ENCODE measurements at regions of chr7 and their contacts with region 1.

Region 1: GRCh38 chr7:100673300-100673941 is at the start of gene GNB2:
- DNase-seq: peak; percentile 97 to 99 (median 99)
- H3K4me3 ChIP-seq: peak within 1 kb of the TSS; percentile 64 to 100 (median 85)
- H3K4me3 Mint-ChIP-seq: peak within 1 kb of the TSS; percentile 97 to 98
- H3K27ac ChIP-seq: peak within 1 kb of the TSS; percentile 88 to 91
- H3K27ac Mint-ChIP-seq: peak within 1 kb of the TSS; percentile 94 to 98 (median 97)
- H3K4me1 ChIP-seq: peaks cover 30 to 42% of the 10 kb centered on the region in 2 donors
- H3K4me1 Mint-ChIP-seq: peaks cover 31% of the 10 kb centered on the region
- H3K27me3 ChIP-seq: no peaks in the 10 kb centered on the region
- H3K27me3 Mint-ChIP-seq: peaks cover 4 to 9% (median 8%) of the 10 kb centered on the region in 3 donors
- CTCF ChIP-seq: no peak
- polyA plus RNA-seq, gene GNB2: 90.0 to 436 (median 94.6) TPM

Region 2: GRCh38 chr7:100126931-100127865 is 546.2 kb before region 1 on chr7 and contains the start of gene MBLAC1:
- intact Hi-C with region 1: loop called in 1 of 2 experiments (anchors 10 kb)
- DNase-seq: peak; percentile 81 to 90 (median 84)
- H3K4me3 ChIP-seq: peak within 1 kb of the TSS; percentile 83 to 93 (median 87)
- H3K4me3 Mint-ChIP-seq: peak within 1 kb of the TSS; percentile 98 to 99
- H3K27ac ChIP-seq: peak within 1 kb of the TSS; percentile 92 to 93
- H3K27ac Mint-ChIP-seq: peak within 1 kb of the TSS; percentile 98 to 100 (median 99)
- H3K4me1 ChIP-seq: peaks cover 42 to 52% of the 10 kb centered on the region in 2 donors
- H3K4me1 Mint-ChIP-seq: peaks cover 45% of the 10 kb centered on the region
- H3K27me3 ChIP-seq: peaks cover 0 to 14% of the 10 kb centered on the region in 2 donors
- H3K27me3 Mint-ChIP-seq: peaks cover 11 to 19% (median 17%) of the 10 kb centered on the region in 3 donors
- CTCF ChIP-seq: no peak
- polyA plus RNA-seq, gene MBLAC1: 0.57 to 0.81 (median 0.59) TPM

Region 3: DNA sequence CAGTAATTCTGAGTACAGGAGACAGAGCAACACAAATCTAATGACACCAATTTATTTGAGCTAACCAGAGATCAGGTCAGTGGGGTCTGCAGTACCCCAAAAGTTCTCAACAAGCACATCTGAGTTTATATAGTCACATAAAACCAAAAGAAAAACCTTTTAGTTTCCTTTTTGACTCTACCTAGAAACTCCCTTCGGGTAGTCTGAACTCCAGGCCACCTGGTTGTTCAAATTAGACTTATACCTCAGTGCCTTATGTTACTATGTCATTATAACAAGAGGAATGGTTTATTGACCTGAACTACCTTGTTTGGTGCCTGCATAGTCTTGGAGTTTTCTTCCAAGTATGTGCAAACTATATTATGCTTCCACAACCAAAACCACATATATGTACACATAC is 259.5 kb before region 1 on chr7:
- intact Hi-C with region 1: no loop called
- DNase-seq: no peak
- H3K4me3 ChIP-seq: no peak overlapping the region
- H3K4me3 Mint-ChIP-seq: no peak overlapping the region
- H3K27ac ChIP-seq: peak overlapping the region in 1 of 2 donors; percentile 21
- H3K27ac Mint-ChIP-seq: peak overlapping the region in 1 of 7 donors; percentile 49
- H3K4me1 ChIP-seq: peaks cover 10 to 14% of the 10 kb centered on the region in 2 donors
- H3K4me1 Mint-ChIP-seq: peaks cover 10% of the 10 kb centered on the region
- H3K27me3 ChIP-seq: no peaks in the 10 kb centered on the region
- H3K27me3 Mint-ChIP-seq: peaks cover 0 to 4% (median 0%) of the 10 kb centered on the region in 3 donors
- CTCF ChIP-seq: no peak

Region 4: DNA sequence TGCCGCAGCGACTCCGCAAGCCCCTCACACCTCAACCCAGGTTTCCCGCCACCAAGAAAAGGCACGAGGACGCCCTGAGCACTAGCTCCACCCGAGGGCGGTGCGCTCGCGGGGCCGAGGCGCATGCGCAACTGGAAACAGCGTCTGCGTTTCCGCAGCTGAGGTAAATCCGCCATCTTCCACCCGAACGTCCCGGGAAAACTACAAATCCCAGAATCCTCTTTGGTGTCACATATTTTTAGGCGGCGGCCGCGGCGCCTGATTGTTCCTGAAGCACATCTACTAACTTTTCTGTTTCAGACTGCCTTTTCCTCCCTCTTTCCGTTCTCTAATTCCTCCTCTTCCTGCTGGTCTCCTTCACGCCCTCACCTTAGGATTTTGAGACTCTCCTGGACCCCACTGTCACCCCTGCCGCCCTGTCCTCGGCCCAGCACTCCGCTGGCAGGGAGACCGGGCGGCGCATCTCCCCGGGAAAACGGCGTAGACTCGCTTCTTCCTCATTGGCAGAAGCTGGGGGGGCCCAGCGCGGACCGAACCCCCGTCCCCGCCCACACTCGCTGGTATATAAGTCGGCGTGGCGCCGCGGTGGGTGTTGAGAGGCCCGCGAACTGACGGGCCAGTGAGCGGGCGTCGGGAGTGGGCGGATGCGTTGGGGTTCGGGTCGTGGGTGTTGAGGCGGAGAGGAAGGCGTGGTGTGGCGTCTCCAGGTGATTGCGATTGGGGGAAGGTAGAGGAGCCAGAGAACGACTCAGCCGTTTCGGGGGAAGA is 245.0 kb before region 1 on chr7 and contains the start of gene ZCWPW1:
- intact Hi-C with region 1: loop called in 1 of 2 experiments (anchors 10 kb)
- DNase-seq: peak; percentile 91 to 97 (median 95)
- H3K4me3 ChIP-seq: peak within 1 kb of the TSS; percentile 77 to 93 (median 80)
- H3K4me3 Mint-ChIP-seq: peak within 1 kb of the TSS; percentile 96 to 99
- H3K27ac ChIP-seq: peak within 1 kb of the TSS; percentile 99 to 100
- H3K27ac Mint-ChIP-seq: peak within 1 kb of the TSS; percentile 99 to 100 (median 100)
- H3K4me1 ChIP-seq: peaks cover 23 to 31% of the 10 kb centered on the region in 2 donors
- H3K4me1 Mint-ChIP-seq: peaks cover 29% of the 10 kb centered on the region
- H3K27me3 ChIP-seq: no peaks in the 10 kb centered on the region
- H3K27me3 Mint-ChIP-seq: peaks cover 1 to 6% (median 1%) of the 10 kb centered on the region in 3 donors
- CTCF ChIP-seq: no peak
- polyA plus RNA-seq, gene ZCWPW1: 0.60 to 1.9 (median 1.2) TPM

Region 5: DNA sequence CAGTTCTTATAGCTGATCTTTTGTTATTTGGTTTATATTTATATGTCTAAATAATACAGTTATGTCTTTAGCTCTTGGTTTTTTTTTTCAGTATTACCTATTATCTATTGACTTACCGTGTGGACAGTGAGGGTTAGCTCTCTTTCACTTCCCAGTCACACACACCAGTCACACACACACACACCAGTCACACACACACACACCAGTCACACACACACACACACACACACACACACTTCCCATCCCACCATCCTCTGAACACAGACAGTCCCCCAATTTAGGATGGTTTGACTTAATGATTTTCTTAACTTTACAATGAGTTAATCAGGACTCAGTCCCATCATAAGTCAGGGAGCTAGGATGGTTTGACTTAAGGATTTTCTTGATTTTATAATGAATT is 153.3 kb before region 1 on chr7:
- intact Hi-C with region 1: no loop called
- DNase-seq: no peak
- H3K4me3 ChIP-seq: no peak overlapping the region
- H3K4me3 Mint-ChIP-seq: no peak overlapping the region
- H3K27ac ChIP-seq: no peak overlapping the region
- H3K27ac Mint-ChIP-seq: no peak overlapping the region
- H3K4me1 ChIP-seq: peaks cover 6 to 11% of the 10 kb centered on the region in 2 donors
- H3K4me1 Mint-ChIP-seq: peaks cover 9% of the 10 kb centered on the region
- H3K27me3 ChIP-seq: no peaks in the 10 kb centered on the region
- H3K27me3 Mint-ChIP-seq: peaks cover 0 to 7% (median 4%) of the 10 kb centered on the region in 3 donors
- CTCF ChIP-seq: no peak

Region 6: DNA sequence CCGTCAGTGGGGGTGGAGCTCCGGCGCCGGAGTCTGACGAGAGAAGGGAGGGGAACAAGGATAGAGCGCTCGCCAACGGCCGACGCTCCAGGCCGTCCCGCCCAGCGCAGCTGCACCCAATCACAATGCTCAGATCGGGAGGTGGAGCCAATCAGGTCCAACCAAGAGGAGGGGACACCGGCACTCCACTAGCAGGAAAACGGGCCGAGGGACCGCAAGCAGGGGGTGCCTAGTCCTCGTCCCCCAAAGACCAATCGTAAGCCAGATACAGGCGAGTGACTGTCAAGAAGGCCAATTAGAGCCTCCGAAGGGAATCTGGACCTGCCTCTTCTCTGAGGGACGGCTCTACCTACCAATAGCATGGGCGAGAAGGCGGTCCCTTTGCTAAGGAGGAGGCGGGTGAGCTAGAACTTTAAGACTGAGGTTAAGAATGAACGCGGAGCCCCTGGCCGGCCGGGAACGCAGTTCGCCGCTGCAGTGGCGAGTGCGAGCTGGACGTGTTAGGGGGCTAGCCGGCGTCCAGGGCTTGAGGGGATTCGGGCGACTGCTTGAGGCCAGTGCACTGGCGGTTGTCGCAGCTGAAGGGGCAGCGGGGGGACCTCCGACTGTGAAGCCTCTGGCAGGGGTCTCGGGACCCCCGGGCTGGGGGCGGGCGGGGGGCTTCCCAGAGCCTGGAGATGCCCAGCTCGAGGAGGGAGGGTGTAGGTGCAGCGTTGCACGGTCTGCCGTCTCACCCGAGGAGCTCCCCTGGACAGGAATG is 87.0 kb before region 1 on chr7 and contains the start of gene FBXO24:
- intact Hi-C with region 1: loop called (anchors 1 to 2 kb)
- DNase-seq: peak; percentile 100
- H3K4me3 ChIP-seq: peak within 1 kb of the TSS; percentile 77 to 100 (median 93)
- H3K4me3 Mint-ChIP-seq: peak within 1 kb of the TSS; percentile 93 to 99
- H3K27ac ChIP-seq: peak within 1 kb of the TSS; percentile 84 to 88
- H3K27ac Mint-ChIP-seq: peak within 1 kb of the TSS; percentile 93 to 98 (median 98)
- H3K4me1 ChIP-seq: peaks cover 40 to 52% of the 10 kb centered on the region in 2 donors
- H3K4me1 Mint-ChIP-seq: peaks cover 48% of the 10 kb centered on the region
- H3K27me3 ChIP-seq: peaks cover 0 to 14% of the 10 kb centered on the region in 2 donors
- H3K27me3 Mint-ChIP-seq: peaks cover 11 to 23% (median 17%) of the 10 kb centered on the region in 3 donors
- CTCF ChIP-seq: no peak
- polyA plus RNA-seq, gene FBXO24: 0.42 to 1.2 (median 0.69) TPM

Region 7: DNA sequence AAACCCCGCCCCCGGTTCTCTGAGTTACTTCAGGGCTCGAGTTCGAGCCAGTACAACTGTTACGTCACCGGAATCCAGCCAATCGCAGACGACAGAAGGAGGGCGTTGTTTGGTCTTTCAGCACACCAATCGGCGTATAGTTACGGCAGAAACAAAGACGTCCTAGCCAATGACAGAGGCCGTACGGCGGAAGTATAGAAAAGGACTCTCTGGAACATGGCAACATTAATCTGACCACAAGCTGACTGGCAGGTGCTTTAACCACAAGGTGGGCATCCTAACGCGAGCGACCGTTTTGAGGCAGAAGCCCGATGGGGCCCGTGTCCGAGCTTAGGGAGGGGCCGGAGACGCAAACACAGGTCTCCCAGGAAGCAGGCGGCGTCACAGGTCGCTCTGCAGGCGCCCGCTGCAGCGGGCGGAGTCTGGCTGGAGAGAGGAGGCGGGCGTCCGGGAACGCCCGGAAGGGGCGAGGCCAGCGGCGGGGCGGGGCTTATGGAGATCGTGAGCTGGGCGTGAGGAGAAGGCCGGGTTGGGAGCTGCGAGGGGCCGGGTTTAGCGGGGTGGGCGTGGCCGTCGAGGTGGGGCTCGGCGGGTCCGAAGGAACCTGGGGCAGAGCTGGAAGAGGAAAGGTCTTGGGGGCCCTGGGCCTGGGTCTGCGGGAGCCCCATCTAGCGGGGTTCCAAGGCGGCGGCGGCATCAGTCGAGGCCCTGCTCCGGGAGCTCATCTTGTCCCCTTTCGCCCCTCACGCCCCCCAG is 61.3 kb before region 1 on chr7 and contains the start of gene MOSPD3:
- intact Hi-C with region 1: loop called in 1 of 2 experiments (anchors 1 kb)
- DNase-seq: peak; percentile 98 to 99 (median 98)
- H3K4me3 ChIP-seq: peak within 1 kb of the TSS; percentile 60 to 91 (median 64)
- H3K4me3 Mint-ChIP-seq: peak within 1 kb of the TSS; percentile 93 to 97
- H3K27ac ChIP-seq: peak within 1 kb of the TSS; percentile 66 to 95
- H3K27ac Mint-ChIP-seq: peak within 1 kb of the TSS; percentile 97 to 100 (median 99)
- H3K4me1 ChIP-seq: peaks cover 22 to 27% of the 10 kb centered on the region in 2 donors
- H3K4me1 Mint-ChIP-seq: peaks cover 19% of the 10 kb centered on the region
- H3K27me3 ChIP-seq: no peaks in the 10 kb centered on the region
- H3K27me3 Mint-ChIP-seq: peaks cover 2 to 10% (median 8%) of the 10 kb centered on the region in 3 donors
- CTCF ChIP-seq: no peak
- polyA plus RNA-seq, gene MOSPD3: 12.7 to 15.5 (median 13.3) TPM

Region 8: DNA sequence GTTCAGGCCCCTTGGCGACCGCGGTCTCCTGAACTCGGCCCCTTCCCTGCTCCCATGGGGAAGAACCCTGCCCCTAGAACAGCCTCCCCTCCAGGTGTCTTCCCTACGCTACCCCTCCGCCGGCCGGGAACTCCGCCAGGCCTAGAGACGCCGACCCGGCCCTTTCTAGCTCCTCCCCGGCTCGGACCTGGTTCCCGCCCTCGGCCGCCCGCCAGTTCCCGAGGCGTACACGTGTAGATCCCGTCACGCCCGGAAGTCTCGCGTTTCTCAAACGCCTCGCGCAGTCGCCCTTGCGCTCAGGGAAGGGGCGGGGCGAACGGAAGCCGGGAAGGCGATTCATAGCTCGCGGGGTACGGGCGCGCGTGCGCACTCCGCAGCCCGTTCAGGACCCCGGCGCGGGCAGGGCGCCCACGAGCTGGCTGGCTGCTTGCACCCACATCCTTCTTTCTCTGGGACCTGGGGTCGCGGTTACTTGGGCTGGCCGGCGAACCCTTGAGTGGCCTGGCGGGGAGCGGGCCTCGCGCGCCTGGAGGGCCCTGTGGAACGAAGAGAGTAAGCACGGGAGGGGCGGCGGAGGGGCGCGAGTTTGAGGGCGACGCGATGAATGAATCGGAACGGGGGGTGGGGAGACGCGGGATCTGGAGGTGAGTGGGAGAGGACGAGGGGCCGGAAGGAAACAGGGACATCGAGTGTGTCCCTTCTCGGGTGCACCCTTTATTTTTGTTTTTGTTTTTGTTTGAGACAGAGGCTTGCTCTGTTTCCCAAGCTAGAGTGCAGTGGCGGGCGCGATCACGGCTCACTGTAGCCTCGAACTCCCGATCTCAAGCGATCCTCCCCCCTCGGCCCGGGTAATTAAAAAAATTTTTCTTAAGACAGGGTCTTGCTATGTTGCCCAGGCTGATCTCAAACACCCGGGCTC is 32.6 kb after region 1 on chr7 and contains the start of gene POP7:
- intact Hi-C with region 1: loop called in 1 of 2 experiments (anchors 5 kb)
- DNase-seq: peak; percentile 96
- H3K4me3 ChIP-seq: peak within 1 kb of the TSS; percentile 67 to 95 (median 93)
- H3K4me3 Mint-ChIP-seq: peak within 1 kb of the TSS; percentile 94 to 96
- H3K27ac ChIP-seq: peak within 1 kb of the TSS; percentile 84 to 87
- H3K27ac Mint-ChIP-seq: peak within 1 kb of the TSS; percentile 82 to 96 (median 92)
- H3K4me1 ChIP-seq: peaks cover 16 to 23% of the 10 kb centered on the region in 2 donors
- H3K4me1 Mint-ChIP-seq: peaks cover 16% of the 10 kb centered on the region
- H3K27me3 ChIP-seq: peaks cover 0 to 3% of the 10 kb centered on the region in 2 donors
- H3K27me3 Mint-ChIP-seq: peaks cover 6 to 15% (median 10%) of the 10 kb centered on the region in 3 donors
- CTCF ChIP-seq: no peak
- polyA plus RNA-seq, gene POP7: 11.1 to 48.5 (median 41.6) TPM

Measured in CD14-positive monocyte (primary cell).